Activated B cell treated with CpG ODN at 0.5 μM for 24 hours (primary cell): ENCODE measurements at regions of chr5 and their contacts with region 1.

Region 1: DNA sequence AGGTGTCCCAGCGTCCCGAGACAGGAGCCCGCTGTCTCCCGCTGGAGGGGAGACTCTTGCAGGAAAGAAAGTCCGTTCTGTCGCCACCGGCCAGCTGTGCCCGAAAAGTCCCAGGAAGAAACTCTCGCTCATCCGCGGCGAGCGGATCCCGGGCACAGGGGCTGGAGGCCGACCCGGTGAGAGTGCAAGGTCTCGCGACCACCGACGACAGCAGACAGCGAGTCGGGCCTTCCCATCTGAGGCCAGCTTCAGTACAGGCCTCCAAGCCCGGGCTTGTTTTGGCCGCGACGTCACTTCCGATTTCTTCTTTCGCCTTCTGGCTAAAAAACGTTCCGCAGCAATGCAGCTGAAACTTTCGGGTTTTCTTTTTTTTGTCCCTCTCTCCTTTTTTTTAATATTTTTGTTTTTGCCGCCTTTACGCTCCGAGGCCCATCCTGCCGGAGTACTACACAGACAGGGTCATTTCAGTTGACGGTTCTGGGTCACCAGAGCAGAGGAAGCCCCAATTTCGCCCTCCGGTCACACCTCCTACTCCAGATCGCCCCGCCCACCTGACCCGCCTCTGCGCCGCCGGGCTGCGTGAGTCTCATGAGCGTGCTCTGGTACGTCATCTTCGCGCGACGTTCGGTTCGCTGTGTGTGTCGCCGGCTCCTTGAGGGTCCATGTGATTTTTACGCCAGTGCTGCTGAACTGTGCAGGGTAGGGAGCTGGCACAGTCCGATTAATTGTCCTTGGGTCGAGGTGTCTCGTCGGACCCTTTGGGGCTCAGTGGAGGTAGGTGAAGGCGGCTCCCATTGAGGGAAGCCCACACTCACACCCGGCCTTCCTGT is at the starts of genes ANKRA2 and UTP15:
- DNase-seq: peak; percentile 98
- ATAC-seq: peak; percentile 96
- H3K4me3 Mint-ChIP-seq: peak within 1 kb of the TSS; percentile 99
- H3K27ac Mint-ChIP-seq: peak within 1 kb of the TSS; percentile 100
- H3K4me1 Mint-ChIP-seq: peaks cover 37% of the 10 kb centered on the region
- H3K27me3 Mint-ChIP-seq: no peaks in the 10 kb centered on the region
- CTCF ChIP-seq: no peak
- total RNA-seq, gene ANKRA2: 17.7 and 22.9 TPM in 2 replicates
- total RNA-seq, gene UTP15: 35.7 and 40.4 TPM in 2 replicates

Region 2: DNA sequence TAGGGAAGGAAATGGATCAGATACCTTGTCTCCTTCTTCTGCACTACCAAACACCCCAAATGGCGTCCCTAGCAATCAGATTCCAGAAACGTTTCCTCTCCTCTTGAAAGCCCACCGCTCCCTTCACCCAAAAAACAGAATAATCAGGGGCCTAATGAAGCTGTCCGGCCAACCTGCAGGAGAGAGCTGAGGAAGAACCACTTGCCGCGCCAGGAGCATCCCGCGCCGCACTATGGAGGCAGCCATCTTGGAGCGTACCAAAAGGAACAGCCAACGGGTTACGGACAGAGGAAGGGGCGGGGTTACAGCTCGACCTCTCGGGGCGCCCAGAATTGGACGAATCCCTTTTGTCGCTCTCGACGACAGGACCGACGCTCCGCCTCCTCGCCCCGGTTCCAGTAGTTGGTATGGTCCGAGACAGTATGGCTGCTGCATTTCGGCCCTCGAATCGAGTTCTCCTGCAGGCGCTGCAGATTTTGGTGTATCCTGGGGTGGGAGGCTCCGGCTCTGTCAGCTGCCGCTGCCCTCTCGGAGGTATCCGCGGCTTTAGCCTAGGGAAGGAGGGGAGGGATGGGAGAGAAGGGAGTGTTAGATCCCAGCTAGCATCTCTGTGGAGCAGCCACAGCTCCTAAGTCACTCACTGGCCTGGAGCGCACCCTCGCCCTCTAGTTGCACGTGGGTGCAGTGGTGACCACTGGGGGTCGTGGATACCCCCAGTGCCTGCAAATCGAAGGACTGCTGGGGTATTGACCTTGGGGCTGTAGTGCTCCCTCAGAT is 1245.2 kb before region 1 on chr5 and contains the starts of genes MRPS27 and PTCD2:
- CTCF ChIA-PET with region 1: no interaction called
- POLR2A ChIA-PET with region 1: no interaction called
- intact Hi-C with region 1: loop called (anchors 5 kb)
- DNase-seq: peak; percentile 79
- ATAC-seq: peak; percentile 99
- H3K4me3 Mint-ChIP-seq: peak within 1 kb of the TSS; percentile 98
- H3K27ac Mint-ChIP-seq: peak within 1 kb of the TSS; percentile 93
- H3K4me1 Mint-ChIP-seq: peaks cover 25% of the 10 kb centered on the region
- H3K27me3 Mint-ChIP-seq: no peaks in the 10 kb centered on the region
- CTCF ChIP-seq: no peak
- total RNA-seq, gene MRPS27: 69.2 and 71.6 TPM in 2 replicates
- total RNA-seq, gene PTCD2: 6.2 and 8.9 TPM in 2 replicates

Region 3: GRCh38 chr5:73290242-73290641 is 275.1 kb before region 1 on chr5:
- CTCF ChIA-PET with region 1: no interaction called
- POLR2A ChIA-PET with region 1: no interaction called
- intact Hi-C with region 1: no loop called
- DNase-seq: no peak
- ATAC-seq: no peak
- H3K4me3 Mint-ChIP-seq: no peak overlapping the region
- H3K27ac Mint-ChIP-seq: no peak overlapping the region
- H3K4me1 Mint-ChIP-seq: no peaks in the 10 kb centered on the region
- H3K27me3 Mint-ChIP-seq: peaks cover 29% of the 10 kb centered on the region
- CTCF ChIP-seq: no peak

Region 4: DNA sequence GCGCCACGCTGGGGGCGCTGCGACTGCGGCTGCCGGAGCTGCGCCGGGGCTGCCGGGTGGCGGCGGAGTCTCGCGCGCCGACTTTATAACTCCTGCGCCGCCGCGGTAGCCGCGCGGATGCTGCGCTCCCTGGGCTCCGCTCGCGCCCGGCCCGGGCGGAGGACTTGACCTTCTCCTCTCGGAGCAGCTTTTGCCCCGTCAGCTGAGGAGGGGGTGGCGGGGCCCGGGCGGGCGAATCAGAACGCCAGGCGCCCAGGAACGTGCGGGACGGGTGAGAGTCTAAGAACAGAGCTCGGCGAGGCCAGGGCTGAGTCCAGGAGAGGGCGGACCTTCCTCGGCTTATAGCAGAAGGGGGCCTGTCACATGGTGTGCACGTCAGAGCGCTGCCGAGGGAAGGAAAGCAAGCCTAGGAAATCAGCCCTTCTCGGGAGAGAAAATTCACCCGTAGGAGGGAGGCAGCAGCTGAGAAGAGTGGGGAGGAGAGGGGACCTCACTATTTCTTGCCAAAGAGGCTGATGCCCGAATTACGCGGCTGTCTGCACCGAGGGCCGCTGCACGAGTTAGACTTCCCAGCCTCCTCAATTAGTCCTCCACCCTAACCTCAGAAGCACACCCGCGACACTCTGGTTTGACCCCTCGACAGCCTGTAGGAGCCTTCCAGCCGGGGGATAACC is 116.8 kb before region 1 on chr5 and contains the start of gene FOXD1:
- CTCF ChIA-PET with region 1: no interaction called
- POLR2A ChIA-PET with region 1: no interaction called
- intact Hi-C with region 1: loop called (anchors 2 kb)
- DNase-seq: peak; percentile 54
- ATAC-seq: peak; percentile 61
- H3K4me3 Mint-ChIP-seq: peak within 1 kb of the TSS; percentile 88
- H3K27ac Mint-ChIP-seq: peak within 1 kb of the TSS; percentile 50
- H3K4me1 Mint-ChIP-seq: peaks cover 16% of the 10 kb centered on the region
- H3K27me3 Mint-ChIP-seq: peaks cover 63% of the 10 kb centered on the region
- CTCF ChIP-seq: no peak
- total RNA-seq, gene FOXD1: 0.09 and 0.10 TPM in 2 replicates

Region 5: GRCh38 chr5:74640450-74640953 is 1075.1 kb after region 1 on chr5 and contains the start of gene ENC1:
- CTCF ChIA-PET with region 1: no interaction called
- POLR2A ChIA-PET with region 1: no interaction called
- intact Hi-C with region 1: loop called (anchors 2 kb)
- DNase-seq: peak; percentile 76
- ATAC-seq: peak; percentile 79
- H3K4me3 Mint-ChIP-seq: peak within 1 kb of the TSS; percentile 91
- H3K27ac Mint-ChIP-seq: peak within 1 kb of the TSS; percentile 69
- H3K4me1 Mint-ChIP-seq: peaks cover 32% of the 10 kb centered on the region
- H3K27me3 Mint-ChIP-seq: peaks cover 3% of the 10 kb centered on the region
- CTCF ChIP-seq: no peak
- total RNA-seq, gene ENC1: 6.6 and 7.2 TPM in 2 replicates

Region 6: GRCh38 chr5:75236322-75237316 is 1671.3 kb after region 1 on chr5 and contains the start of gene ANKRD31:
- CTCF ChIA-PET with region 1: no interaction called
- POLR2A ChIA-PET with region 1: no interaction called
- intact Hi-C with region 1: loop called (anchors 5 kb)
- DNase-seq: peak; percentile 89
- ATAC-seq: peak; percentile 99
- H3K4me3 Mint-ChIP-seq: peak within 1 kb of the TSS; percentile 93
- H3K27ac Mint-ChIP-seq: peak within 1 kb of the TSS; percentile 83
- H3K4me1 Mint-ChIP-seq: peaks cover 9% of the 10 kb centered on the region
- H3K27me3 Mint-ChIP-seq: peaks cover 3% of the 10 kb centered on the region
- CTCF ChIP-seq: peak; percentile 62
- total RNA-seq, gene ANKRD31: 0.13 and 0.15 TPM in 2 replicates